HCT116 (cell line): ENCODE measurements at regions of chr6 and their contacts with region 1.

Region 1: DNA sequence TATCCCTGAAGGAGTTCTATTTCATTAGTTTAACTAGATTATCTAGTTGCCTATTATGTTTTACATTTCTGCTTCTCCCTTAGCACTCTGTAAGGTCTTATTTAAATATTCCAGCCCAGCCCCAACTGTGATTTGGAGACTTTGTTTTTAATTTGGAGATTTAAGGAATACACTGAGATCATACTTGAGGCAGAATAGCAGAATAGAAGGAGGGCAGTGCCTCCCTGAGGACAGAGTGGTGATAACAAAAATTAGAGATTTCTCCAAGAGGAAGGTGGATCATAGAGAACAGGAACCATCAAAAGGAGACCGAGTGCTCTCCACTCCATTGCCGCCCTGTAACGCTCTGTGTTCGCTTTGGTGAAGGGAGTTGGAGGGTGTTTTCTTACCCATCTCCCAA is 14.8 kb upstream of the CD164 start:
- DNase-seq: no peak
- ATAC-seq: peak; percentile 74
- H3K4me3 ChIP-seq: no peak overlapping the region
- H3K27ac ChIP-seq: no peak overlapping the region
- H3K4me1 ChIP-seq: peaks cover 0 to 18% of the 10 kb centered on the region in 2 experiments; a peak in 3 of 4 replicates
- H3K27me3 ChIP-seq: no peaks in the 10 kb centered on the region
- CTCF ChIP-seq: peak; percentile 16 to 58 (median 47); a peak in 4 of 6 replicates
- POLR2A ChIP-seq: no peak
- RAD21 ChIP-seq: peak; percentile 73

Region 2: GRCh38 chr6:108622641-108623298 is 774.2 kb before region 1 on chr6:
- CTCF ChIA-PET with region 1: no interaction called
- POLR2A ChIA-PET with region 1: no interaction called
- RAD21 ChIA-PET with region 1: no interaction called
- intact Hi-C with region 1: no loop called
- DNase-seq: no peak
- ATAC-seq: no peak; the same call in 1 of the 2 replicates
- H3K4me3 ChIP-seq: no peak overlapping the region
- H3K27ac ChIP-seq: no peak overlapping the region
- H3K4me1 ChIP-seq: peaks cover 0 to 33% of the 10 kb centered on the region in 2 experiments; a peak in 2 of 4 replicates
- H3K27me3 ChIP-seq: no peaks in the 10 kb centered on the region
- CTCF ChIP-seq: no peak
- POLR2A ChIP-seq: no peak
- RAD21 ChIP-seq: 0 out of 2 replicates have a peak, but pooled peaks have one; percentile 6

Region 3: DNA sequence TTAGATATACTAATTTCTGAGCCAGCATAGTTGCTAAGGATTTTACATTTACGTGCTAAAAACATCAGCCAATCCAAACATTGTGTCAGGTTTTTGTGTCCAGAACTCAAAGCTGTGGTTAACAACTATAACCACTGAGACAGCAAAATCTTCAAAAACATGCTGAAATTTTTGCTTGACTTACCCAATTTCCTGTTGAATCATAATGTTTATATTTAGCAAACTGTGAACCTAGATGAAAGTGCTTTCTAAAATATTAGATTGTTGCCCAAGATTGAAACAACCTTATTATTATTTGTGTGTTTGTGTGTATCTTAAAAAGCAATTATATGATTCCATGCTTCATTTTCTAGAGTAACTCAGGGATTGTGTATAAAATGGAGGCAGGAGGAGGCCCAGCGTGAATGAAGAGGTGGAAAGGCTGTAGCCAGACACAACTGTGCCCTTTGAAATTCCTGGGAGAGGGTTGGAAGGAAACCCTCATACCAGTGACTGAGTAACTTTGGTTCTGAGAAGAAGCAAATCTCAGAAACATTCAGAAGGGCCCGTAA is 500.8 kb before region 1 on chr6:
- CTCF ChIA-PET with region 1: no interaction called
- POLR2A ChIA-PET with region 1: no interaction called
- RAD21 ChIA-PET with region 1: no interaction called
- intact Hi-C with region 1: loop called (anchors 10 kb)
- DNase-seq: no peak
- ATAC-seq: no peak
- H3K4me3 ChIP-seq: no peak overlapping the region
- H3K27ac ChIP-seq: no peak overlapping the region
- H3K4me1 ChIP-seq: peaks cover 6 to 16% of the 10 kb centered on the region in 2 experiments
- H3K27me3 ChIP-seq: no peaks in the 10 kb centered on the region
- CTCF ChIP-seq: no peak
- POLR2A ChIP-seq: no peak
- RAD21 ChIP-seq: no peak

Region 4: GRCh38 chr6:109382576-109383437 is 14.2 kb before region 1 on chr6:
- CTCF ChIA-PET with region 1: interaction called, 11 read pairs
- POLR2A ChIA-PET with region 1: interaction called, 14 read pairs
- RAD21 ChIA-PET with region 1: no interaction called
- intact Hi-C with region 1: no loop called
- DNase-seq: peak; percentile 89
- ATAC-seq: peak; percentile 84
- H3K4me3 ChIP-seq: peak overlapping the region; percentile 75 to 80
- H3K27ac ChIP-seq: peak overlapping the region; percentile 92
- H3K4me1 ChIP-seq: peaks cover 4 to 27% of the 10 kb centered on the region in 2 experiments; a peak in 3 of 4 replicates
- H3K27me3 ChIP-seq: no peaks in the 10 kb centered on the region
- CTCF ChIP-seq: peak; percentile 53 to 79 (median 60); a peak in 5 of 6 replicates
- POLR2A ChIP-seq: peak; percentile 16
- RAD21 ChIP-seq: peak; percentile 87

Region 5: GRCh38 chr6:109655761-109656262 is 258.8 kb after region 1 on chr6:
- CTCF ChIA-PET with region 1: no interaction called
- POLR2A ChIA-PET with region 1: no interaction called
- RAD21 ChIA-PET with region 1: no interaction called
- intact Hi-C with region 1: no loop called
- DNase-seq: no peak
- ATAC-seq: no peak
- H3K4me3 ChIP-seq: no peak overlapping the region
- H3K27ac ChIP-seq: no peak overlapping the region
- H3K4me1 ChIP-seq: peaks cover 0 to 5% of the 10 kb centered on the region in 2 experiments; a peak in 1 of 4 replicates
- H3K27me3 ChIP-seq: no peaks in the 10 kb centered on the region
- CTCF ChIP-seq: no peak
- POLR2A ChIP-seq: no peak
- RAD21 ChIP-seq: no peak